HCT116 (cell line): ENCODE measurements at regions of chr7 and their contacts with region 1.

Region 1: GRCh38 chr7:12623897-12624498 is 53.5 kb downstream of the SCIN start:
- DNase-seq: peak; percentile 13
- ATAC-seq: peak; percentile 58
- H3K4me3 ChIP-seq: 0 out of 4 replicates have a peak overlapping the region, but pooled peaks of 1 of the 2 experiments have one; percentile 19
- H3K27ac ChIP-seq: no peak overlapping the region
- H3K4me1 ChIP-seq: no peaks in the 10 kb centered on the region
- H3K27me3 ChIP-seq: no peaks in the 10 kb centered on the region
- CTCF ChIP-seq: peak; percentile 64 to 86 (median 81)
- POLR2A ChIP-seq: no peak
- RAD21 ChIP-seq: peak; percentile 82

Region 2: GRCh38 chr7:11831736-11832495 is 792.1 kb before region 1 on chr7 and contains the start of gene THSD7A:
- CTCF ChIA-PET with region 1: no interaction called
- POLR2A ChIA-PET with region 1: no interaction called
- RAD21 ChIA-PET with region 1: no interaction called
- intact Hi-C with region 1: loop called (anchors 10 kb)
- DNase-seq: no peak
- ATAC-seq: peak; percentile 90
- H3K4me3 ChIP-seq: peak within 1 kb of the TSS; percentile 50 to 71
- H3K27ac ChIP-seq: no peak within 1 kb of the TSS
- H3K4me1 ChIP-seq: peaks cover 0 to 15% of the 10 kb centered on the region in 2 experiments; a peak in 1 of 4 replicates
- H3K27me3 ChIP-seq: no peaks in the 10 kb centered on the region
- CTCF ChIP-seq: peak in 1 of 3 experiments; percentile 13; a peak in 1 of 6 replicates
- POLR2A ChIP-seq: no peak
- RAD21 ChIP-seq: peak; percentile 19
- total RNA-seq, gene THSD7A: 0.05 TPM

Region 3: GRCh38 chr7:12458520-12459131 is 165.4 kb before region 1 on chr7:
- CTCF ChIA-PET with region 1: interaction called, 6 read pairs
- POLR2A ChIA-PET with region 1: no interaction called
- RAD21 ChIA-PET with region 1: no interaction called
- intact Hi-C with region 1: loop called (anchors 10 kb)
- DNase-seq: peak; percentile 23
- ATAC-seq: peak; percentile 100
- H3K4me3 ChIP-seq: no peak overlapping the region
- H3K27ac ChIP-seq: no peak overlapping the region
- H3K4me1 ChIP-seq: peaks cover 0 to 2% of the 10 kb centered on the region in 2 experiments; a peak in 2 of 4 replicates
- H3K27me3 ChIP-seq: no peaks in the 10 kb centered on the region
- CTCF ChIP-seq: peak; percentile 67 to 82 (median 71); a peak in 5 of 6 replicates
- POLR2A ChIP-seq: no peak
- RAD21 ChIP-seq: peak; percentile 82

Region 4: GRCh38 chr7:12549106-12549505 is 74.9 kb before region 1 on chr7:
- CTCF ChIA-PET with region 1: no interaction called
- POLR2A ChIA-PET with region 1: no interaction called
- RAD21 ChIA-PET with region 1: interaction called in 1 of 2 experiments, 3 read pairs
- intact Hi-C with region 1: loop called (anchors 10 kb)
- DNase-seq: no peak
- ATAC-seq: no peak
- H3K4me3 ChIP-seq: no peak overlapping the region
- H3K27ac ChIP-seq: no peak overlapping the region
- H3K4me1 ChIP-seq: peaks cover 7 to 10% of the 10 kb centered on the region in 2 experiments
- H3K27me3 ChIP-seq: no peaks in the 10 kb centered on the region
- CTCF ChIP-seq: no peak
- POLR2A ChIP-seq: no peak
- RAD21 ChIP-seq: no peak